ENCODE measurements at regions of chr5 and their contacts with region 1.

Region 1: DNA sequence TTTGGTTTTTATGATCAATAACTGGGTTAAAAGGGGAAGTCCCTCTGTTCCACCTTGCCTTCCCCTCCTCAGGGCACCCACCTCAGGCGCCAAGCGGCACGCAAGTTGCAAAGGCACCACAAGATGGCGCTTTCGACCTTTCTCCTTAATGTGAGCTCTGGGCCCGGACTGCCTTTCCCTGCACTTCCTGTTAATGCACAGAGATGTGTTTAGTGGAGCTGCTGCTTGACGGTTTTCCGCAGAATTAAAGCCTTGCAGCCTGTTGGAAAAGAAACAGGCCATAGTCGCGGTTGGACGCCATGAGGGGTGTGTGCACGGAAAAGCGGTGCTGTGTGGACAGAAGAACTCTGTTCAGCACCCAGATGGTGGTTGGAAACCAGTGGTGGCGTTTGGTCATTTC is 17.9 kb downstream of the CXCL14 start:
- DNase-seq: peak; percentile 58 to 75 (median 67)
- ATAC-seq: peak; percentile 53 to 92 (median 82)
- H3K4me3 ChIP-seq: no peak overlapping the region
- H3K27ac ChIP-seq: no peak overlapping the region
- H3K4me1 ChIP-seq: peaks cover 0 to 3% (median 0%) of the 10 kb centered on the region in 12 donors
- H3K27me3 ChIP-seq: peaks cover 0 to 43% (median 16%) of the 10 kb centered on the region in 9 donors
- CTCF ChIP-seq: peak; percentile 61 to 84 (median 80)
- POLR2A ChIP-seq: no peak

Region 2: GRCh38 chr5:135628771-135629563 is 68.1 kb after region 1 on chr5:
- intact Hi-C with region 1: no loop called
- DNase-seq: no peak
- ATAC-seq: no peak
- H3K4me3 ChIP-seq: no peak overlapping the region
- H3K27ac ChIP-seq: no peak overlapping the region
- H3K4me1 ChIP-seq: no peaks in the 10 kb centered on the region
- H3K27me3 ChIP-seq: no peaks in the 10 kb centered on the region
- CTCF ChIP-seq: no peak
- POLR2A ChIP-seq: no peak

Region 3: GRCh38 chr5:135729321-135729786 is 168.5 kb after region 1 on chr5:
- intact Hi-C with region 1: loop called in 3 of 10 experiments (anchors 5 to 10 kb)
- DNase-seq: no peak
- ATAC-seq: no peak
- H3K4me3 ChIP-seq: no peak overlapping the region
- H3K27ac ChIP-seq: no peak overlapping the region
- H3K4me1 ChIP-seq: no peaks in the 10 kb centered on the region
- H3K27me3 ChIP-seq: no peaks in the 10 kb centered on the region
- CTCF ChIP-seq: peak in 4 of 12 donors; percentile 5 to 20 (median 11)
- POLR2A ChIP-seq: no peak

Region 4: DNA sequence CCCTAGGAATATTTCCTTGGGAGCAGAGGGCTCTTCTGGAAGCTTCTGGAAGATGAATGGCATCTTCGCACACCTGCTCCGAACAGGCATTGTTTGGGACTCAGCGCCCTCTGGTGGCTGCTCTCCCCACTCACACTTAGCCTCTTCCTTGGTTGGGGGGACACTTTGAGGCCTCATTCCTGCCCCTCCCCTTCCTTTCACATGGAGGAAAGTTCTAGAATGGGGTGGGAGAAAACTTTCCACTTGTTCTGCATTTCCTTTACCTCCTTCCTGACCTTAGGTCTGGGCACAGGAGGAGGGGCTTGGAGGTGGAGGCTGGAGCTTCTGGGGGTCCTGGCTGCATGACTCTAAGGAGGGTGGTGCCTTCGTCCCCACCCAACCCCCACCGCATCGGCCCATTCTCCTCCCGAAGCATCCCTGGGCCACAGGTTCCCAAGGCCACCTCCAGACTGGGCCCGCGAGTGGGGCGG is 651.4 kb after region 1 on chr5:
- intact Hi-C with region 1: loop called in 3 of 10 experiments (anchors 5 to 10 kb)
- DNase-seq: peak; percentile 41 to 76 (median 60)
- ATAC-seq: peak in 2 of 4 donors; percentile 56 to 77
- H3K4me3 ChIP-seq: no peak overlapping the region
- H3K27ac ChIP-seq: no peak overlapping the region
- H3K4me1 ChIP-seq: no peaks in the 10 kb centered on the region
- H3K27me3 ChIP-seq: peaks cover 0 to 40% (median 9%) of the 10 kb centered on the region in 9 donors
- CTCF ChIP-seq: peak; percentile 73 to 96 (median 84)
- POLR2A ChIP-seq: no peak